ENCODE measurements at regions of chr7 and their contacts with region 1.

Region 1: DNA sequence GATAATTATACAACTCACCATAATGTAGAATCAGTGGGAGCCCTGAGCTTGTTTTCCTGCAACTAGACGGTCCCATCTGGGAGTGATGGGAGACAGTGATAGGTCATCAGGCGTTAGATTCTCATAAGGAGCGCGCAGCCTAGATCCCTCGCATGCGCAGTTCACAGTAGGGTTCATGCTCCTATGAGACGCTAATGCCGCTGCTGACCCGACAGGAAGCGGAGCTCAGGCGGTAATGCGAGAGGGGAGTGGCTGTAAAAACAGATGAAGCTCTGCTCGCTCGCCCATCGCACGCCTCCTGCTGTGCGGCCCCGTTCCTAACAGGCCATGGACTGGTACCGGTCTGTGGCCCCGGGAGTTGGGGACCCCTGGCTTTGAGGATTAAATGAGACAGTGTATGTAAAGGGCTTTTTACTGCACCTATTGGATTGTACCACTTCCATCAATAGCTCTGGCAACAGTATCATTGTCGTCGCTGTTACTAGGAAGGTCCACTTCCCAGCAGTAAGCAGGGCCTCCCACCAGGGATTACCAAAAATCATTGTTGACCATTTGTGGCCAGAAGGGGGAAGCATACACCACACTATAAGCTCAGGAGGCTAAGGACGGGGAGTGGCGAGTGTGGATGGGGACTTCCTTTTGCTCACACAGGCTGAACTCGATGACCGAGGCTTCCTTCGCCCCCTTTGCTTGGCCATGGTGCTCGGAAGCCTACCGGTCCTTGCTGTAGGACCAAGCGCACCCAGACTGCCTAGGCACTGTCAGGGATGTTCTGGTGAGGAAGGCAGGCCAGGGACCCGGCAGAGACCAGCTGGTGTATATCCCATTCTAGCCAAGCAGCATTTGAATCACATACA is 26.4 kb downstream of the AKR1B1 start:
- DNase-seq: peak; percentile 74
- ATAC-seq: peak; percentile 96
- H3K4me3 Mint-ChIP-seq: peak overlapping the region; percentile 81
- H3K27ac Mint-ChIP-seq: peak overlapping the region; percentile 74
- H3K4me1 Mint-ChIP-seq: no peaks in the 10 kb centered on the region
- H3K27me3 Mint-ChIP-seq: peaks cover 6% of the 10 kb centered on the region; the same call in 1 of the 2 replicates
- CTCF ChIP-seq: peak; percentile 70

Region 2: DNA sequence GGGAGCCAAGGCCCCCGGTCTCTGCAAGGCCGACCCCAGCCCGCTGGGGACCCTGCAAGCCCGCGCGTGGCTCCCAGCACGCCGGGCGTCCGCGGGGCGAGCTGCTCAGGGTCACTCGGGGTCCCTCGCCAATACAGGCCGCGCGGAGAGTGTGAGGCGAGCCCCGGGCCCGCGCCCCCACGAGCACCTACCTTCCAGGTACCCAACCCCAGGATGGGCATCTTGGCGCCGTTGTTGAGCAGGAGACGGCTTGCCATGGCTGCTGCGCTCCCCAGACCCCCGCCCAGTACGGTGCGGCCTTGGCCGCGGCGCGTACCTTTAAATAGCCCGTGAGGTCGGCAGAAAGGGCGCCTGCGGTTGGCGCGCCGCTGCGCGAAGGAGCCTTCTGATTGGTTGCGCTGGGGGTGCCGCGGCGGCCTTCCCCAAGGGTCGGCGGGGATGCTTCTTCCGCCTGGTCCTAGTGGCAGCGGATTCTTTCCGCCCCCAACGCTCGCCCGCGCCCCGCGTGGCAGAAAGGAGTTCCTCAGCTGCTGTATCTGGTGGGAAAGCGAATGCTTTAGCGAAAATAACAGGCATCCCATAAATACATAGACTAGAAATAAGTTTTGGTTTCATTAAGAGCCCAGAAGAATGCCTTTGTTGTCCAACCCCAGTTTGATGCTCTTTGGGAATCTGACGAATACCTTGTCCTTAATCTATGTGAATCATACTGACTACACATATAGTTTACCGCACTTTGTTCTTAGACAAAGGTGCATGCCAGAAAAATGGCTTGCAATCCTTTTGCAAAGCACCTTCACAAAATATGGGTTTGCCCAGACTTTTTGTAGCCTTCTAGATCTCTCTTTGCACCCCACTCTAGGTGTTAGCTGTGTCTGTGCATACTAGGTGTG is 26.5 kb after region 1 on chr7 and contains the start of gene AKR1B1:
- CTCF ChIA-PET with region 1: interaction called, 26 read pairs
- POLR2A ChIA-PET with region 1: no interaction called
- DNase-seq: peak; percentile 95
- ATAC-seq: peak; percentile 96
- H3K4me3 Mint-ChIP-seq: peak within 1 kb of the TSS; percentile 87
- H3K27ac Mint-ChIP-seq: no peak within 1 kb of the TSS
- H3K4me1 Mint-ChIP-seq: peaks cover 22% of the 10 kb centered on the region
- H3K27me3 Mint-ChIP-seq: peaks cover 19% of the 10 kb centered on the region
- CTCF ChIP-seq: no peak
- total RNA-seq, gene AKR1B1: 135 to 148 TPM (median 147 TPM) in 3 replicates

Region 3: DNA sequence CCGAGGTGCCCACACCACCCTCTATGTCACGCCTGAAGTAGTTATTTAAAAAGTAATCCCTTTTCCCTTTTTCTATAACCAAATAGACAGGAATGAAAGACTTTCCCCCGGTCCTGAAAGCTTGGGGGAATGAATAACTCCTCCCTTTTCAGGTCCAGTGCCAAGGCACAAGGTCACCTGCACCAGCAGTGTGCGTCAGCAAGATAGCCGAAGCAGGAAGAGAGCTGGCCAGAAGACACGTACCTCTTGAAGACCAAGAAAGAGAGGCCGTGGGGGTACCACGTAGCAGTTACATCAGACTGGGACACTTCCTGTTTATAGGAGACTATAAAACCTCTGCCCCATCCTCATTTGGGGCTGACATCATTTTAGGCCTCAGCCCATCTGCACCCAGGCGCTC is 37.1 kb after region 1 on chr7:
- CTCF ChIA-PET with region 1: no interaction called
- POLR2A ChIA-PET with region 1: no interaction called
- DNase-seq: no peak
- ATAC-seq: no peak
- H3K4me3 Mint-ChIP-seq: no peak overlapping the region
- H3K27ac Mint-ChIP-seq: no peak overlapping the region
- H3K4me1 Mint-ChIP-seq: peaks cover 6% of the 10 kb centered on the region
- H3K27me3 Mint-ChIP-seq: no peaks in the 10 kb centered on the region; the same call in 1 of the 2 replicates
- CTCF ChIP-seq: no peak

Region 4: DNA sequence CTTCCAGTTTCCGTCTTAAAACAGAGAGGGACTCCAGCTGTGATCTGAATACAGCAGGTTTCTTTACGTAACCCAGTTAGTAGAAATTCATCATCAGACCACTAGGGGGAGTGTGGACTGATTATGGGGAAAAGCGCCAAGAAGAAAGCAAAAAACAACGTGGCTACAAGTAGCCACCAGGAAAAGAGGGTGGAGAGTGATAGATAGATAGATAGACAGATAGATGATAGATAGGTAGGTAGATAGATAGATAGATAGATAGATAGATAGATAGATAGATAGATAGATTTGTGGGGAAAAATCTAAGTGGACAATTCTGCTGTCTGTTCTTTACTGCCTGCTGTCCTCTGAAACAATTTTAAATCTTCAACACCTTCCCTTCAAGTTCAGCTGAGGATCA is 82.1 kb after region 1 on chr7:
- CTCF ChIA-PET with region 1: interaction called, 41 read pairs
- POLR2A ChIA-PET with region 1: no interaction called
- DNase-seq: no peak
- ATAC-seq: peak; percentile 64
- H3K4me3 Mint-ChIP-seq: no peak overlapping the region
- H3K27ac Mint-ChIP-seq: no peak overlapping the region
- H3K4me1 Mint-ChIP-seq: peaks cover 11% of the 10 kb centered on the region
- H3K27me3 Mint-ChIP-seq: peaks cover 6% of the 10 kb centered on the region
- CTCF ChIP-seq: peak; percentile 87

Region 5: GRCh38 chr7:134553976-134554375 is 121.5 kb after region 1 on chr7:
- CTCF ChIA-PET with region 1: interaction called, 57 read pairs
- POLR2A ChIA-PET with region 1: no interaction called
- DNase-seq: peak; percentile 20
- ATAC-seq: peak; percentile 66
- H3K4me3 Mint-ChIP-seq: no peak overlapping the region
- H3K27ac Mint-ChIP-seq: no peak overlapping the region
- H3K4me1 Mint-ChIP-seq: peaks cover 8% of the 10 kb centered on the region
- H3K27me3 Mint-ChIP-seq: no peaks in the 10 kb centered on the region; the same call in 1 of the 2 replicates
- CTCF ChIP-seq: no peak